ENCODE measurements at regions of chr7 and their contacts with region 1.

Region 1: DNA sequence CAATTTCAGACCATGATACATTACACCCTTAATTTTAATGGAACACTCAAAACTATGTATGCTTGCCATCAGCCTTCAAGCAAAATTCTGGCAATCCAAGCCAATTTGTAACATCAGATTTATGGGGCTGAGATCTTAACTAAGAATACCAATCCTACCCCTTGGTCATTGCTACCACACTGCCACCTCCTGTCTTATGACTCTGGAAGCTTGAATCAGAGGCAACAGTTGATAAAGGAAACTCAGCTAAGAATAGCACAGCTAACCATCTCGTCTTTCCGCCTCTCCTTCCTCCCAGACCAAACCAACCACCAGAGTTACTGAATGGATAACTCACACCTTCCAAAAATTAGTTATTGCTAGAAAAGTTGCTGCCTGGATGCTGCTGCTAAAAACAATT is 7.4 kb downstream of the IGF2BP3 start:
- DNase-seq: no peak
- ATAC-seq: peak; percentile 83 to 87
- H3K4me3 ChIP-seq: no peak overlapping the region
- H3K27ac ChIP-seq: no peak overlapping the region
- H3K4me1 ChIP-seq: no peaks in the 10 kb centered on the region
- H3K27me3 ChIP-seq: peaks cover 7% of the 10 kb centered on the region

Region 2: GRCh38 chr7:22849163-22849562 is 613.7 kb before region 1 on chr7:
- intact Hi-C with region 1: no loop called
- DNase-seq: no peak
- ATAC-seq: no peak
- H3K4me3 ChIP-seq: no peak overlapping the region
- H3K27ac ChIP-seq: no peak overlapping the region
- H3K4me1 ChIP-seq: no peaks in the 10 kb centered on the region
- H3K27me3 ChIP-seq: no peaks in the 10 kb centered on the region

Region 3: GRCh38 chr7:23273141-23273599 is 189.7 kb before region 1 on chr7:
- intact Hi-C with region 1: loop called in 1 of 4 experiments (anchors 5 kb)
- DNase-seq: peak; percentile 78 to 94 (median 90)
- ATAC-seq: peak; percentile 85 to 92
- H3K4me3 ChIP-seq: no peak overlapping the region
- H3K27ac ChIP-seq: no peak overlapping the region
- H3K4me1 ChIP-seq: no peaks in the 10 kb centered on the region
- H3K27me3 ChIP-seq: no peaks in the 10 kb centered on the region

Region 4: GRCh38 chr7:23284871-23285270 is 178.0 kb before region 1 on chr7:
- intact Hi-C with region 1: loop called in 1 of 4 experiments (anchors 5 kb)
- DNase-seq: no peak
- ATAC-seq: no peak
- H3K4me3 ChIP-seq: no peak overlapping the region
- H3K27ac ChIP-seq: no peak overlapping the region
- H3K4me1 ChIP-seq: no peaks in the 10 kb centered on the region
- H3K27me3 ChIP-seq: no peaks in the 10 kb centered on the region

Region 5: DNA sequence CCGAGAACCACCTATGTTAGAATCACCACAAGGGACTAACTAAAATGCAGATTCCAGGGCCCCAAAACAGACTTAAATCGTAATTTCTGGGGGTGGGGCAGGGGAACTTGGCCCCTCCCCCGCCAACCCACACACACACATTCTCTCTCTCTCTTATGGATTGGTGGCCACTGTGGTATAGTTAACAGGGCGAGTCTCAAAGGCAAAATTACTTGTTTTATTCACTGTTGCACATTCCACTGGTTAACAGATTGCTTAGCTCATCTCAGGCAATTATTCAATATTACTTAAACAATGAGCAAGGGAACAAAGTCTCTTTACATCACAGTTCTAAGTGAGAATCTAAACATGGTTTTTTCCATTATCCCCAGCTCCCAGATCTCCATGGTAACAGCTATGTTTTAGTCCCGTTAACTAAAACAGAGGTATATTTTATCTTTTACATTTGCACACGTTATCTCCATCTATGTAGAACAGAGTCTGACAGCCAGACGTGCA is 31.1 kb before region 1 on chr7:
- intact Hi-C with region 1: no loop called
- DNase-seq: no peak
- ATAC-seq: no peak
- H3K4me3 ChIP-seq: no peak overlapping the region
- H3K27ac ChIP-seq: no peak overlapping the region
- H3K4me1 ChIP-seq: no peaks in the 10 kb centered on the region
- H3K27me3 ChIP-seq: no peaks in the 10 kb centered on the region